Activated B cell treated with CpG ODN at 0.5 μM for 24 hours (primary cell): ENCODE measurements at regions of chr4 and their contacts with region 1.

Region 1: GRCh38 chr4:153438916-153439756 is 27.0 kb upstream of the TMEM131L start:
- DNase-seq: peak; percentile 37
- ATAC-seq: peak; percentile 68
- H3K4me3 Mint-ChIP-seq: peak overlapping the region; percentile 83
- H3K27ac Mint-ChIP-seq: peak overlapping the region; percentile 92
- H3K4me1 Mint-ChIP-seq: peaks cover 67% of the 10 kb centered on the region
- H3K27me3 Mint-ChIP-seq: no peaks in the 10 kb centered on the region
- CTCF ChIP-seq: no peak

Region 2: GRCh38 chr4:152304220-152304619 is 1134.9 kb before region 1 on chr4:
- CTCF ChIA-PET with region 1: no interaction called
- POLR2A ChIA-PET with region 1: no interaction called
- intact Hi-C with region 1: no loop called
- DNase-seq: no peak
- ATAC-seq: no peak
- H3K4me3 Mint-ChIP-seq: no peak overlapping the region
- H3K27ac Mint-ChIP-seq: no peak overlapping the region
- H3K4me1 Mint-ChIP-seq: peaks cover 2% of the 10 kb centered on the region
- H3K27me3 Mint-ChIP-seq: no peaks in the 10 kb centered on the region
- CTCF ChIP-seq: no peak

Region 3: DNA sequence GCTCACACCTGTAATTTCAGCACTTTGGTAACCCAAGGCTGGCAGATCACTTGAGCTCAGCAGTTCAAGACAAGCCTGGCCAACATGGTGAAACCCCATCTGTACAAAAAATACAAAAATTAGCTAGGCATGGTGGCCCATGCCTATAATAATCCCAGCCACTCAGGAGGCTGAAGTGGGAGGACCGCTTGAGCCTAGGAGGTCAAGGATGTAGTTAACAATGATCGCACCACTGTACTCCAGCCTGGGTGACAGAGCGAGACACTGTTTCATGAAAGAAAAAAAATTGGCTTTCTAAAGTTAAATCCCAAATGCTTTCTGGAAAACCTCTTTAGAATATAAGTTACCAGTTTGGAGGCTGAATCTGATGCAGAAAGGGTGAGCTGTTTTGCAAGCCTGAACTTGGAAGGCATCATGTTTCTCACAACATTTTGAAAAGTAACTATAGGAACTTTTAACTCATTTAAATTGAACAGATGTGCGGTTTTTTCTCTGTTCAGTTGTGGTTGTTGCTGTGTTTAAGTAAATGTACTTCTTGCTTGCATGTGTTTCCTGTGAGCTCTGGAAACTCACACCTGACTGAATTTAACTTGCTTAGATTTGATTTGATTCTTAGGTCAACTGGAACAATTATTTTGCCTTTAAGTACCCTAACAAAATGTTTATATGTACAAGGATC is 12.8 kb before region 1 on chr4:
- CTCF ChIA-PET with region 1: no interaction called
- POLR2A ChIA-PET with region 1: interaction called, 3 read pairs
- intact Hi-C with region 1: loop called (anchors 1 kb)
- DNase-seq: no peak
- ATAC-seq: peak; percentile 75
- H3K4me3 Mint-ChIP-seq: no peak overlapping the region
- H3K27ac Mint-ChIP-seq: peak overlapping the region; percentile 71
- H3K4me1 Mint-ChIP-seq: peaks cover 49% of the 10 kb centered on the region
- H3K27me3 Mint-ChIP-seq: no peaks in the 10 kb centered on the region
- CTCF ChIP-seq: no peak

Region 4: DNA sequence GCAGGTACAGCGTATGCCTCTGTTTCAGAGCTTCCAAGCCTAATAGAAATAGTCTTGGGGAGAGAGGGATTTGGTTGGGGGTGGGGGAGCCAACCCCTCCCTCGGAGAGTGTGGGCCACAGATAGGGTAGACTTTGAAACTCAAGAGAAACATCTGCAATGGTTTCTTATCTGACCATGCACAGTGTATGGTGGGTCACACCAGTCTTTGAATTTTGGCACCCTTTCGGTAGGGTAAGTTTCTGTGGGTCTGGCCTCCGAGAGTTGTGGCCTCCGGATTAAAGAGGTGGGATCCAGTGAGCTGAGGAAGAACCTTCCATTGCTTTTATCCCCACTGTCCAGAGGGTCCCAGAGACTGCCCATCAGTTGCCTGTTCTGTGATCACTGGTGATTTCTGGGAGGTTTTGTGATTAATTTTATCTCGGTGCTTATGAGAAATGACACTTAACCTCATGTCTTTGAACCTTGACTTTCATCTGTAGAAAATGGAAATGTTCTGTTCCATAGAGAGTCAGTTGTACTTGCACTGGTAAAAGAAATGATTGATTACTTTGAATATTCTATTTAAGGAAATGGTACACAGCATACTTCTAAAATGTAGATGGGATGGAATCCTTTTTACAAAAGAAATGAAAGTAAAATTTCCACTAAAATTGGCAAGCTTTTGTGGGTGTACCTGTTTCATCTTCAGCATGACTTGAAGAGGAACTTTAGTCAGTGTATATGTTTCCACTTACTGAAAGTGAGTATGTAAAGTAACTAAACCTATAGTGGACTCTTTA is 89.8 kb after region 1 on chr4:
- CTCF ChIA-PET with region 1: no interaction called
- POLR2A ChIA-PET with region 1: interaction called, 12 read pairs
- intact Hi-C with region 1: no loop called
- DNase-seq: no peak
- ATAC-seq: no peak
- H3K4me3 Mint-ChIP-seq: peak overlapping the region; percentile 56
- H3K27ac Mint-ChIP-seq: peak overlapping the region; percentile 82
- H3K4me1 Mint-ChIP-seq: peaks cover 93% of the 10 kb centered on the region
- H3K27me3 Mint-ChIP-seq: no peaks in the 10 kb centered on the region
- CTCF ChIP-seq: no peak